PC-3 (cell line): ENCODE measurements at regions of chr13 and their contacts with region 1.

Region 1: DNA sequence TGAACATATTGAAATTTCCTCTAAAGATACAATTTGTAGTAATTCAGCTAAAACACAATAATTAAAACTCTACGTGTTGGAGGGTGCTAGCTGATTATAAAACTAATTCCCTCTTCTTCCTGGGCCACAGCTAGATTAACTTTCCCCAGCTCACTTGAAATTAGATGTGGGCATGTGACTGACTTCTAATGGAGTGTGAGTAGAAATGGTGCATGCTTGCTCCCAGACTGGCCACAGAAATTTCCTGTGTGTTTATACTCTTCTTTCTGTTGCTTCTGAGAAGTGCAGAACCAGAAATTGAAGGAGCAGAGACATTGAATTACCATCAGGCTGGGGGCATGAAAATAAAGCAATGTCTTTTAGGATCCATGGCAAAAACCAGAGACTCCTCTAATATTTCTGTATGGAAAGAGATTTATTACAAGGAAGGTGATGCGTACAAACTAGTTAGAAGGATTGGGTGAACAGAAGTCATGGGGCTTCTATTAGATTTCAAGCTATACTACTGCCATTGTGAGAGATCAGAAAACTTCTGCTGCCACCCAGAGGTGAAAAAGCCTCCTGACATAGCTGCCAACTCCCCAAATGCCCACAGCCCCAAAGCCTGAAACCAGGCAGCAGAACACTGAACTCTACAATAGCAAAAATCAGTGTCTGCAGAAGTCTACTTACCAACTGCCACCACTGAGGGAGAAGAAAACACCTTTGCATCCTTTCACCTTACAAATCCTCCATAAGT is 379.2 kb upstream of the MIR17HG start:
- DNase-seq: peak; percentile 65
- ATAC-seq: peak; percentile 96
- H3K4me3 ChIP-seq: no peak overlapping the region
- H3K27ac ChIP-seq: no peak overlapping the region
- H3K4me1 ChIP-seq: no peaks in the 10 kb centered on the region
- H3K27me3 ChIP-seq: no peaks in the 10 kb centered on the region
- CTCF ChIP-seq: peak; percentile 74

Region 2: GRCh38 chr13:90455823-90456222 is 512.5 kb before region 1 on chr13:
- CTCF ChIA-PET with region 1: no interaction called
- POLR2A ChIA-PET with region 1: no interaction called
- intact Hi-C with region 1: loop called (anchors 10 kb)
- DNase-seq: peak; percentile 25
- ATAC-seq: peak; percentile 54
- H3K4me3 ChIP-seq: no peak overlapping the region
- H3K27ac ChIP-seq: no peak overlapping the region
- H3K4me1 ChIP-seq: peaks cover 6% of the 10 kb centered on the region
- H3K27me3 ChIP-seq: no peaks in the 10 kb centered on the region
- CTCF ChIP-seq: peak; percentile 32

Region 3: GRCh38 chr13:90585392-90585791 is 382.9 kb before region 1 on chr13:
- CTCF ChIA-PET with region 1: no interaction called
- POLR2A ChIA-PET with region 1: no interaction called
- intact Hi-C with region 1: no loop called
- DNase-seq: no peak
- ATAC-seq: peak; percentile 35; the same call in 1 of the 2 replicates
- H3K4me3 ChIP-seq: no peak overlapping the region
- H3K27ac ChIP-seq: no peak overlapping the region
- H3K4me1 ChIP-seq: no peaks in the 10 kb centered on the region
- H3K27me3 ChIP-seq: no peaks in the 10 kb centered on the region
- CTCF ChIP-seq: no peak

Region 4: GRCh38 chr13:90883592-90883991 is 84.7 kb before region 1 on chr13:
- CTCF ChIA-PET with region 1: interaction called, 6 read pairs
- POLR2A ChIA-PET with region 1: no interaction called
- intact Hi-C with region 1: loop called (anchors 1 kb)
- DNase-seq: peak; percentile 28
- ATAC-seq: peak; percentile 42; the same call in 1 of the 2 replicates
- H3K4me3 ChIP-seq: no peak overlapping the region
- H3K27ac ChIP-seq: no peak overlapping the region
- H3K4me1 ChIP-seq: no peaks in the 10 kb centered on the region
- H3K27me3 ChIP-seq: no peaks in the 10 kb centered on the region
- CTCF ChIP-seq: peak; percentile 44; the same call in 1 of the 2 replicates